ENCODE measurements at regions of chr3 and their contacts with region 1.

Region 1: GRCh38 chr3:62785387-62785982 is 89.7 kb downstream of the CADPS start:
- DNase-seq: no peak
- ATAC-seq: no peak
- H3K4me3 ChIP-seq: no peak overlapping the region
- H3K27ac ChIP-seq: no peak overlapping the region
- H3K4me1 ChIP-seq: no peaks in the 10 kb centered on the region
- H3K27me3 ChIP-seq: no peaks in the 10 kb centered on the region
- CTCF ChIP-seq: no peak
- POLR2A ChIP-seq: no peak
- RAD21 ChIP-seq: no peak

Region 2: GRCh38 chr3:62888197-62888596 is 102.7 kb after region 1 on chr3:
- CTCF ChIA-PET with region 1: no interaction called
- POLR2A ChIA-PET with region 1: no interaction called
- dilution Hi-C with region 1: no loop called
- in situ Hi-C with region 1: no loop called
- intact Hi-C with region 1: no loop called
- DNase-seq: no peak
- ATAC-seq: no peak
- H3K4me3 ChIP-seq: no peak overlapping the region
- H3K27ac ChIP-seq: no peak overlapping the region
- H3K4me1 ChIP-seq: no peaks in the 10 kb centered on the region
- H3K27me3 ChIP-seq: no peaks in the 10 kb centered on the region
- CTCF ChIP-seq: no peak
- POLR2A ChIP-seq: no peak
- RAD21 ChIP-seq: no peak

Region 3: DNA sequence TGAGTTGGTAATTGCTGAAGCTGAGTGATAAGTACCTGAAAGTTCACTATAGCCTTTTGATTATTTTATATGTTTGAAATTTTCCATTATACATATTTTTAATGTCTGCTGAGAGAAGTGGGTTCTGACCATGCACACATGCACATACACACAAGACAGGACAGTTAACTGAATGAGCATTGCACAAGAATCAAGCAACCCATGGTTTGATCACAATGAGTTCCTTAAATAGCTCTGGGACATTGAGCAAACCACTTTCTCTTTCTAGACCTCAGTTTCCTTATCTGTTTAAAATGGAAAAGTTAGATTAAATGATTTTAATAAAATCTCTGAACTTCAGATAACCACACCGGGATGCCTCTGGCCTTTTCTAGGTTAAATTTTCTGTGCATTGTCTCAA is 893.7 kb after region 1 on chr3:
- CTCF ChIA-PET with region 1: no interaction called
- POLR2A ChIA-PET with region 1: no interaction called
- dilution Hi-C with region 1: no loop called
- in situ Hi-C with region 1: no loop called
- intact Hi-C with region 1: loop called (anchors 5 kb)
- DNase-seq: no peak
- ATAC-seq: no peak
- H3K4me3 ChIP-seq: no peak overlapping the region
- H3K27ac ChIP-seq: no peak overlapping the region
- H3K4me1 ChIP-seq: no peaks in the 10 kb centered on the region
- H3K27me3 ChIP-seq: no peaks in the 10 kb centered on the region; the same call in 1 of the 2 replicates
- CTCF ChIP-seq: no peak
- POLR2A ChIP-seq: no peak
- RAD21 ChIP-seq: no peak